ENCODE measurements at regions of chr1 and their contacts with region 1.

Region 1: GRCh38 chr1:46203738-46204405 is 738 bp downstream of the LURAP1 start:
- DNase-seq: no peak
- H3K4me3 ChIP-seq: peak overlapping the region; percentile 74 to 95 (median 78)
- H3K27ac ChIP-seq: peak overlapping the region; percentile 81 to 87
- H3K4me1 ChIP-seq: peaks cover 0 to 5% of the 10 kb centered on the region in 2 donors
- H3K27me3 ChIP-seq: no peaks in the 10 kb centered on the region
- CTCF ChIP-seq: no peak
- POLR2A ChIP-seq: no peak

Region 2: DNA sequence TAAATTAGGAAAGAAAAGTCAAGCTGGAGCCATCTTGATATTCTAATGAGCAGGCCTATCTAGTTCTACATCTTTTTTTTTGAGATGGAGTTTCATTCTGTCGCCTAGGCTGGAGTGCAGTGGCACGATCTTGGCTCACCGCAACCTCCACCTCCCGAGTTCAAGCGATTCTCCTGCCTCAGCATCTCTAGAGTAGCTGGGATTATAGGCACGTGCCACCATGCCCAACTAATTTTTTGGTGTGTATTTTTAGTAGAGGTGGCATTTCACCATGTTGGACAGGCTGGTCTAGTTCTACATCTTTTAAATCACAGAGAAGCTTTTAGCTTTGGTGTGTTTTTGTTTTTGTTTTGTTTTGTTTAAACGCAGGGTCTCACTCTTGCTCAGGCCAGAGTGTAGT is 509.0 kb before region 1 on chr1:
- intact Hi-C with region 1: loop called (anchors 5 kb)
- DNase-seq: no peak
- H3K4me3 ChIP-seq: no peak overlapping the region
- H3K27ac ChIP-seq: no peak overlapping the region
- H3K4me1 ChIP-seq: no peaks in the 10 kb centered on the region
- H3K27me3 ChIP-seq: no peaks in the 10 kb centered on the region
- CTCF ChIP-seq: no peak
- POLR2A ChIP-seq: no peak

Region 3: DNA sequence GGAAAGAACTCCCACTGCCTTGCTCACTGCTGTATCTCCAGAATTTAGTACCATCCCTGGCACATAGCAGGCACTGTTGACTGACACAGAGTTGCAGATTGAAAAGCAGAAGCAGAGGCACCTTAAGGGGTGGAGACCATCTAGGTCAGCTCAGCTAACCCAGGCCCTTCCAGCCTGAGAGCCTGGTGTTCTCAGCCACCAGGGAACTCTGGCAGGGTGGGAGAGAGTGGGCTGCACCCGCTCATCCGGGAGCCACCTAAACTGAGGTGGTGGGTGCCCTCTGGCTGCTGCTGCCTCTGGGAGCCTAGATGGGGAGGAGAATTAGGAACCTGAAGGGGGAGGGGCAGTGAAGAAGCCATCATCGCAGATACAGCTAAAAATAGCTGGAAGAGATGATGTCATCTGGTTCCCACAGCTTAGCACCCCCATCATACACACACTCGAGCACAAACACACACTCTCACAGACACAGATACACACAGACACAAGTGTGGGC is 30.5 kb before region 1 on chr1:
- intact Hi-C with region 1: no loop called
- DNase-seq: no peak
- H3K4me3 ChIP-seq: no peak overlapping the region
- H3K27ac ChIP-seq: peak overlapping the region; percentile 83 to 93
- H3K4me1 ChIP-seq: peaks cover 7 to 22% of the 10 kb centered on the region in 2 donors
- H3K27me3 ChIP-seq: no peaks in the 10 kb centered on the region
- CTCF ChIP-seq: no peak
- POLR2A ChIP-seq: no peak

Region 4: GRCh38 chr1:46262508-46262907 is 58.6 kb after region 1 on chr1:
- intact Hi-C with region 1: no loop called
- DNase-seq: no peak
- H3K4me3 ChIP-seq: no peak overlapping the region
- H3K27ac ChIP-seq: no peak overlapping the region
- H3K4me1 ChIP-seq: no peaks in the 10 kb centered on the region
- H3K27me3 ChIP-seq: no peaks in the 10 kb centered on the region
- CTCF ChIP-seq: no peak
- POLR2A ChIP-seq: no peak

Region 5: GRCh38 chr1:47002211-47002610 is 798.3 kb after region 1 on chr1:
- intact Hi-C with region 1: no loop called
- DNase-seq: no peak
- H3K4me3 ChIP-seq: no peak overlapping the region
- H3K27ac ChIP-seq: no peak overlapping the region
- H3K4me1 ChIP-seq: no peaks in the 10 kb centered on the region
- H3K27me3 ChIP-seq: no peaks in the 10 kb centered on the region
- CTCF ChIP-seq: peak in 2 of 3 donors; percentile 18 to 40
- POLR2A ChIP-seq: no peak